Activated CD4-positive, alpha-beta T cell treated with anti-CD3 and anti-CD28 coated beads, Interleukin-2, amount 10 ng/mL, durations not matched to agents 24 days and 14 days (primary cell): ENCODE measurements at regions of chr14 and their contacts with region 1.

Region 1: GRCh38 chr14:61636779-61637178 is 58.5 kb upstream of the HIF1A start:
- DNase-seq: no peak
- H3K4me3 Mint-ChIP-seq: no peak overlapping the region
- H3K27ac Mint-ChIP-seq: peak overlapping the region; percentile 74
- H3K4me1 Mint-ChIP-seq: peaks cover 14% of the 10 kb centered on the region
- H3K27me3 Mint-ChIP-seq: no peaks in the 10 kb centered on the region

Region 2: GRCh38 chr14:61653507-61653906 is 16.7 kb after region 1 on chr14:
- intact Hi-C with region 1: loop called (anchors 2 kb)
- DNase-seq: no peak
- H3K4me3 Mint-ChIP-seq: no peak overlapping the region
- H3K27ac Mint-ChIP-seq: no peak overlapping the region
- H3K4me1 Mint-ChIP-seq: peaks cover 30% of the 10 kb centered on the region
- H3K27me3 Mint-ChIP-seq: no peaks in the 10 kb centered on the region

Region 3: DNA sequence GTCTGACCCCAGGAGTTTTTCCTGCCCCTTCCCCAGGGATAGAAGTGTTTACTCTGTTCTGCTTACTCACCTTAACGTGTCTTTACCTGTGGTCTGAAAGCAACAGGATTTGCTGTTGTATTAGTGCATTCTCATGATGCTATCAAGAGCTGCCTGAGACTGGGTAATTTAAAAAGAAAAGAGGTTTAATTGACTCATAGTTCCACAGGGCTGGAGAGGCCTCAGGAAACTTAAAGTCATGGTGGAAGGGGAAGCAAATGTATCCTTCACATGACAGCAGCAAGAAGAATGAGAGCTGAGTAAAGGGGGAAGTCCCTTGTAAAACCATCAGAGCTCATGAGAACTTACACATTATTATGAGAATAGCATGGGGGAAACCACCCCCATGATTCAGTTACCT is 365.9 kb after region 1 on chr14:
- intact Hi-C with region 1: no loop called
- DNase-seq: no peak
- H3K4me3 Mint-ChIP-seq: no peak overlapping the region
- H3K27ac Mint-ChIP-seq: no peak overlapping the region
- H3K4me1 Mint-ChIP-seq: no peaks in the 10 kb centered on the region
- H3K27me3 Mint-ChIP-seq: peaks cover 7% of the 10 kb centered on the region